HepG2 (cell line): ENCODE measurements at regions of chr18 and their contacts with region 1.

Region 1: DNA sequence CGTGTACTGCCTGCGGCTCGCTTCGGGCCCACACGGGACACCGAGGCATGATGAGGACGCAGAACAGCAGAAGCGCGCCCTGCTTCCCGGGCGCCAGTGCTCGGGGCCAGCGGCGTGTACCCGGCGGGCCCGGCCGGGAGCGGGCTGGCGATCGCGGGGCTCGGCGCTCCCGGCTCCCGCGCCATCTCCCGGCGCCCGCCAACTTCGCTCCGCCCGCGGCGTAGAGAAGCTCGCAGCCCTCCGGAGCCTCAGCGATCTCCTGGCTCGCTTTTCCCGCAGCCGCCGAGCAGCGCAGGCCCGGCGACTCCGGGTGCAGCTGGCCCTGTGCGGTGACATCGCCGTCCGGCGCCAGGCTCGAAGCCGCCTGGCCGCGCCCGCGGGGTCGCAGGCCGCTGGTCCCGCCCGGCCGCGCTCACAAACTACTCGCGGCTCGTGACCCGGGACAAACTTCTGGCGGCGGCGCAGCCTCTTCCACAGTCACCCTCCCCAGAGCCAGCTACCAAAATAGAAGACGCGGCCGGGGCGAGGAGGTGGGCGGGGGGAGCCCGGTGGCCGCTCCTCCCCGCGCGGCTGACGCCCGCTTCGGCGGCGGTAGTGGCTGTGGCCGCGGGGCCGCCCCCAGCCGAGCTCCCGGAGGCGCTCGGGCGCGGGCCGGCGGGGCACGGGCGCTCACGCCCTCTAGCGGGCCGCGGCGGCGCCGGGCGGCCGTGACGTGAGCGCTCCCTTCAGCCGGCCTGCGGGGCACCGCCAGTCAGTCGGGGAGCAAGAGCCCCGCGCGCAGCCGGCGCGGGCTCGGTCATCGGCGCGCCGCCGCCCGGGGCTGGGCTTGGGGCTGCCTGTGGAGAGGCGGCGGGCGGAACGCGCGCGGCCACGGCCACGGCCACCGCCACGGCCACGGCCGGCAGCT is at the start of gene PTPRM:
- DNase-seq: peak; percentile 47
- ATAC-seq: peak; percentile 79
- H3K4me3 ChIP-seq: peak within 1 kb of the TSS; percentile 88 to 96 (median 92)
- H3K27ac ChIP-seq: peak within 1 kb of the TSS; percentile 71
- H3K4me1 ChIP-seq: peaks cover 32% of the 10 kb centered on the region
- H3K27me3 ChIP-seq: peaks cover 0 to 14% of the 10 kb centered on the region in 2 experiments; a peak in 2 of 5 replicates
- CTCF ChIP-seq: peak; percentile 43; the same call in 1 of the 2 replicates
- EP300 ChIP-seq: no peak
- POLR2A ChIP-seq: peak; percentile 42 to 48; a peak in 2 of 4 replicates
- RAD21 ChIP-seq: peak; percentile 83
- total RNA-seq, gene PTPRM: 6.5 and 12.6 TPM in 2 replicates

Region 2: GRCh38 chr18:7369006-7369405 is 197.8 kb before region 1 on chr18:
- CTCF ChIA-PET with region 1: no interaction called
- POLR2A ChIA-PET with region 1: no interaction called
- in situ Hi-C with region 1: no loop called
- intact Hi-C with region 1: loop called (anchors 5 kb)
- DNase-seq: no peak
- ATAC-seq: no peak
- H3K4me3 ChIP-seq: no peak overlapping the region
- H3K27ac ChIP-seq: no peak overlapping the region
- H3K4me1 ChIP-seq: no peaks in the 10 kb centered on the region
- H3K27me3 ChIP-seq: no peaks in the 10 kb centered on the region; a peak in 2 of 5 replicates
- CTCF ChIP-seq: no peak
- EP300 ChIP-seq: no peak
- POLR2A ChIP-seq: no peak
- RAD21 ChIP-seq: no peak

Region 3: GRCh38 chr18:7459851-7460770 is 106.7 kb before region 1 on chr18:
- CTCF ChIA-PET with region 1: no interaction called
- POLR2A ChIA-PET with region 1: interaction called, 3 read pairs
- in situ Hi-C with region 1: no loop called
- intact Hi-C with region 1: loop called (anchors 2 kb)
- DNase-seq: peak; percentile 72
- ATAC-seq: peak; percentile 88
- H3K4me3 ChIP-seq: peak overlapping the region; percentile 40 to 71 (median 42)
- H3K27ac ChIP-seq: peak overlapping the region; percentile 62
- H3K4me1 ChIP-seq: peaks cover 42% of the 10 kb centered on the region
- H3K27me3 ChIP-seq: peaks cover 2 to 13% of the 10 kb centered on the region in 2 experiments
- CTCF ChIP-seq: peak; percentile 22; the same call in 1 of the 2 replicates
- EP300 ChIP-seq: 0 out of 4 replicates have a peak, but pooled peaks of 1 of the 2 experiments have one; percentile 29
- POLR2A ChIP-seq: no peak; a peak in 1 of 4 replicates
- RAD21 ChIP-seq: no peak

Region 4: DNA sequence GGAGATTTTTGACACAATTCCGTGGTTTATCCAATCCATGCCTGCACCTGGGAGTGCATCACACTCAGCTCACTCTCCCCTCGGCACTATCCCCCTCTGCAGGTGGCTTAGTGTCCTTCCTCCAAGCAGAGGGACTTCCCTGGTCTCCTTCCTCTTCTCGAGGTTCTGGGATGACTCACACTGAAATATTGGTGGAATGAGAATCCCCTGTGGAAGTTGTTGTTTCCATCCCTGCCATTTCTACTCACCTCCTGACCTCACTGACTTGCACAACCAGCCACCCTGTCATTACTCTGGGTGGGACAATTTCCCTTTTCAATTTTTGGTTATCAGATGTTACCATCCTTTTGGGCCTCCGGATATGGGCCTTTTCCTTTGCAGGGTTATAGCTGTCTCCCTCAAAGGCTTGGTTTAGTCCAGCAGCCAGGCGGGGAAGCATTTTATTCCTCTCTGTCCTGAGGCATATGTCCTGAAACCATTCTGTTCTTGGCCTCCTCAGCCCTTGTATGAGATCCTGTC is 60.2 kb after region 1 on chr18:
- CTCF ChIA-PET with region 1: no interaction called
- POLR2A ChIA-PET with region 1: interaction called, 3 read pairs
- in situ Hi-C with region 1: no loop called
- intact Hi-C with region 1: loop called (anchors 2 kb)
- DNase-seq: peak; percentile 93
- ATAC-seq: peak; percentile 89
- H3K4me3 ChIP-seq: peak overlapping the region in 2 of 3 experiments; percentile 25 to 52; a peak in 4 of 6 replicates
- H3K27ac ChIP-seq: peak overlapping the region; percentile 85
- H3K4me1 ChIP-seq: peaks cover 59% of the 10 kb centered on the region
- H3K27me3 ChIP-seq: no peaks in the 10 kb centered on the region
- CTCF ChIP-seq: peak; percentile 64
- EP300 ChIP-seq: no peak
- POLR2A ChIP-seq: no peak
- RAD21 ChIP-seq: peak; percentile 39; the same call in 1 of the 2 replicates

Region 5: GRCh38 chr18:7755753-7756475 is 189.1 kb after region 1 on chr18:
- CTCF ChIA-PET with region 1: no interaction called
- POLR2A ChIA-PET with region 1: interaction called, 5 read pairs
- in situ Hi-C with region 1: loop called (anchors 5 kb)
- intact Hi-C with region 1: loop called (anchors 1 kb)
- DNase-seq: peak; percentile 63
- ATAC-seq: peak; percentile 53
- H3K4me3 ChIP-seq: peak overlapping the region in 2 of 3 experiments; percentile 52 to 69; a peak in 3 of 6 replicates
- H3K27ac ChIP-seq: peak overlapping the region; percentile 84
- H3K4me1 ChIP-seq: peaks cover 90% of the 10 kb centered on the region
- H3K27me3 ChIP-seq: no peaks in the 10 kb centered on the region
- CTCF ChIP-seq: peak; percentile 68
- EP300 ChIP-seq: 0 out of 4 replicates have a peak, but pooled peaks of 1 of the 2 experiments have one; percentile 38
- POLR2A ChIP-seq: no peak
- RAD21 ChIP-seq: peak; percentile 53; the same call in 1 of the 2 replicates